ENCODE measurements at regions of chr20 and their contacts with region 1.

Region 1: GRCh38 chr20:60505389-60505788 is 547.2 kb downstream of the CDH26 start:
- DNase-seq: no peak

Region 2: GRCh38 chr20:60477958-60478357 is 27.4 kb before region 1 on chr20:
- intact Hi-C with region 1: loop called in 1 of 2 experiments (anchors 2 kb)
- DNase-seq: peak; percentile 83